Calu3 (cell line): ENCODE measurements at regions of chrX and their contacts with region 1.

Region 1: GRCh38 chrX:152958524-152959465 is 35.1 kb downstream of the PNMA5 start:
- DNase-seq: peak; percentile 78
- H3K4me3 Mint-ChIP-seq: peak overlapping the region; percentile 52
- H3K27ac Mint-ChIP-seq: no peak overlapping the region
- H3K4me1 Mint-ChIP-seq: no peaks in the 10 kb centered on the region
- H3K27me3 Mint-ChIP-seq: no peaks in the 10 kb centered on the region
- CTCF ChIP-seq: peak; percentile 84

Region 2: GRCh38 chrX:153032397-153033118 is 73.8 kb after region 1 on chrX:
- CTCF ChIA-PET with region 1: no interaction called
- intact Hi-C with region 1: loop called (anchors 5 kb)
- DNase-seq: peak; percentile 76
- H3K4me3 Mint-ChIP-seq: no peak overlapping the region
- H3K27ac Mint-ChIP-seq: no peak overlapping the region
- H3K4me1 Mint-ChIP-seq: no peaks in the 10 kb centered on the region
- H3K27me3 Mint-ChIP-seq: peaks cover 60% of the 10 kb centered on the region
- CTCF ChIP-seq: peak; percentile 88